Activated CD4-positive, alpha-beta T cell treated with anti-CD3 and anti-CD28 coated beads, Interleukin-2, amount 10 ng/mL, durations not matched to agents 24 days and 14 days (primary cell): ENCODE measurements at regions of chr3 and their contacts with region 1.

Region 1: GRCh38 chr3:71710906-71711494 is 14.2 kb downstream of the EIF4E3 start:
- DNase-seq: peak; percentile 70
- H3K4me3 Mint-ChIP-seq: no peak overlapping the region
- H3K27ac Mint-ChIP-seq: no peak overlapping the region
- H3K4me1 Mint-ChIP-seq: peaks cover 52% of the 10 kb centered on the region
- H3K27me3 Mint-ChIP-seq: no peaks in the 10 kb centered on the region

Region 2: GRCh38 chr3:71784914-71785531 is 74.0 kb after region 1 on chr3 and contains the start of gene PROK2:
- intact Hi-C with region 1: loop called (anchors 5 kb)
- DNase-seq: peak; percentile 71
- H3K4me3 Mint-ChIP-seq: peak within 1 kb of the TSS; percentile 80
- H3K27ac Mint-ChIP-seq: peak within 1 kb of the TSS; percentile 28
- H3K4me1 Mint-ChIP-seq: peaks cover 20% of the 10 kb centered on the region
- H3K27me3 Mint-ChIP-seq: peaks cover 63% of the 10 kb centered on the region
- total RNA-seq, gene PROK2: not detected in 2 replicates

Region 3: DNA sequence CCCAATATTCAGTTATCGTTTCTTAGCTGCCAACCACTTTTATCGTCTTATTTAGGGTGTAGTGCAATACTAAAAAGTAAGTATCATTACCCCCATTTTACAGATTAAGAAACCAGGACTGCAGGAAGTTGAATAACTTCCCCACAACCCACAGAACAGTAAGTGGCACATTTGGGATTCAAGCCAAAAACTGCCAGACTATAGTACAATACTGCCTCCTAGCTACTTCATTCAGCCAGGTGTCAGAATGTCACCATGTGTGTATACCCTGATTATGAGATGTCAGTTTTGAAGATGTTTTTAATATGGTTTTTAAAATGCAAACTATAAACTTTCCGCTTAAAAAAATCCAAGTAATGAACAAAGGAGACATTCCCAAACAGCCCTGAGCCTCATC is 148.1 kb after region 1 on chr3:
- intact Hi-C with region 1: loop called (anchors 1 kb)
- DNase-seq: peak; percentile 69
- H3K4me3 Mint-ChIP-seq: no peak overlapping the region
- H3K27ac Mint-ChIP-seq: no peak overlapping the region
- H3K4me1 Mint-ChIP-seq: peaks cover 5% of the 10 kb centered on the region
- H3K27me3 Mint-ChIP-seq: peaks cover 27% of the 10 kb centered on the region

Region 4: DNA sequence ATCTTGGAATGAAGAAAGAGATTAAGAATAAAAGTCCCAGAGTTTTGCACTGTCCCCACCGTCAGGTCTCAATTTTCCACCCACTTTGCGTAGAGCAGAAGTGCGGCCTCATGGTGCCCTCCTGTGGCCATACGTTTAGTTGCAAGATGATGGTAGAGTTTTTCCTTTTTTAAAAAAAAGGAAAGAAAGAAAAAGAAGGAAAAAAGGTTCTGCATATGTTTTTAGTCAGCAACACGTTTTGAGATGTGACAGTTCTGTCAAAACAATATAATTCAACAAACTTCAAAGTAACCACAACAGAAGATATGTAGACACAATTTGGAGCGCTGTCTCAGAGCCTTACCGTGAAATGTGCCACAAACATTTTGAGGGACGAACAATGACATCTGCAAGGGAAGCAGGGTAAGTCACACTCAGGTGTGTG is 1375.1 kb after region 1 on chr3:
- intact Hi-C with region 1: loop called (anchors 5 kb)
- DNase-seq: peak; percentile 84
- H3K4me3 Mint-ChIP-seq: no peak overlapping the region
- H3K27ac Mint-ChIP-seq: no peak overlapping the region
- H3K4me1 Mint-ChIP-seq: peaks cover 8% of the 10 kb centered on the region
- H3K27me3 Mint-ChIP-seq: peaks cover 7% of the 10 kb centered on the region